MCF 10A (cell line): ENCODE measurements at regions of chr22 and their contacts with region 1.

Region 1: DNA sequence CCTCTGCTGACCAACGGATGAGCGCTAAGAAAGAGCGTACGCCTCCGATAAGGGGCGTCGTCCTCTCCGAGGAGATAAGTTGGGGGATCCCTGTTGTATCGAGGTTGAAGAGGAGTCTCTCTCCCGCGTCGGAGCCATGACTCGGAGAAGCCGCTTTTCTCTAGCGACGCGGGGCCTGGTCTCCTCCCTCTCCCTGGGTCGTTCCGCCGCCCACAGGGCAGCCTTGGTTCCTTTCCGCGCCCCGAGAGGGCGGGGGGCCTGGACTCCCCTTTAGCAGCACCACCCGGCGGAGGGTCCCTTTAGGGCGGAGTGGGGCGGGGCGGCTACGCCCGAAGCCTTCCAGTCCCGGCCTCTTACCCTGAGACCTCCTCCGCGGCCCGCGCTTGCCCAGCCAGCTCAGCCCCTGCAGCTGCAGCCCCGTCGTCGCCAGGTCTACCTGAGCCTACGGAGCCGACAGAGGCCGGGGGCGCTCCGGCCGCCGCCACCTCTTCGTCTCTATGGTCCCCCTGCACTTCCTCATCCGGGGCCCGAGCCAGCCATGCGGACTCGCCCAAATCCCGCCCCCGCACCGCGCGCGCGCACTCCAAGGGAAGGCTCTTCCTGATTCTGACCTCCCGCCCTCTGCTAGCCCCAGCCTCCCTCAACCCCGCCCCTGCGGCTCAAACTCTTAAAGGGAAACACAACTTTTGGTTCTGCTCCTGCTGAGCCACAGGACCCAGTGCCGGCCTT is at the start of gene PRR14L:
- DNase-seq: peak; percentile 97
- H3K4me3 Mint-ChIP-seq: peak within 1 kb of the TSS; percentile 80
- H3K27ac Mint-ChIP-seq: peak within 1 kb of the TSS; percentile 90
- H3K4me1 Mint-ChIP-seq: peaks cover 32% of the 10 kb centered on the region
- H3K27me3 Mint-ChIP-seq: no peaks in the 10 kb centered on the region
- CTCF ChIP-seq: no peak
- total RNA-seq, gene PRR14L: 37.4 and 55.0 TPM in 2 replicates

Region 2: DNA sequence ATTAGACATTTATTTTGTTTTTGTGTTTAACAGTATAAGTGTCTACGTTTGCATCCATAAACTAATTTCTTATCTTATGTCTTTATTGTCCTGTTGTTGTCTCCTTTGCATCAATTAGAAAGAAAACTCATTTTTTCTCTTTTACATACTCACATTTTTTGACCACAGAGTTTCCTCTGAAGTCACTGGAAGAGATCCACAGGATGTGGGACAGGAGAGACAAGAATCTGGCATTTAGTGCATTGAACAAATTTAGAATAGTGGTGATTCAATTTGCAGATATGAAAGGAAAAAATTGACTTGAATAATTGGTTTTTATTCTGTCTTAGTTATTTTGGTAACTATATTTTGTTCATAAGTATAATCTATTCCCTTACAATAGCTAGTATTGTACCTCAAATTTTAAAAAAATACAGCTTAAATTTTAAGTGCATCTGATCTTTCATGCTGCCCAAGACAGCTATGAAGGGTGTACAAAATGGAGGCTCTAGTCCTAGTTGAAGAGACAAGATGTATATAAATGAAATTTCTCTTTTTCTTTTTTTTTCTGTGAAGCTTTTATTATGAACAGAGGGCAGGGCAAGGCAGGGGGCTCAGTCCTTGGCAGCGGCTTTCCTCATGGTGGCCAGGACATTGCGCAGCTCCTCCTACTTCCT is 1645.2 kb before region 1 on chr22:
- CTCF ChIA-PET with region 1: no interaction called
- POLR2A ChIA-PET with region 1: no interaction called
- intact Hi-C with region 1: no loop called
- DNase-seq: no peak
- H3K4me3 Mint-ChIP-seq: no peak overlapping the region
- H3K27ac Mint-ChIP-seq: no peak overlapping the region
- H3K4me1 Mint-ChIP-seq: peaks cover 6% of the 10 kb centered on the region
- H3K27me3 Mint-ChIP-seq: no peaks in the 10 kb centered on the region
- CTCF ChIP-seq: no peak

Region 3: GRCh38 chr22:31676700-31677099 is 73.1 kb before region 1 on chr22:
- CTCF ChIA-PET with region 1: interaction called, 6 read pairs
- POLR2A ChIA-PET with region 1: interaction called, 7 read pairs
- intact Hi-C with region 1: loop called (anchors 5 kb)
- DNase-seq: peak; percentile 96
- H3K4me3 Mint-ChIP-seq: peak overlapping the region; percentile 86
- H3K27ac Mint-ChIP-seq: peak overlapping the region; percentile 97
- H3K4me1 Mint-ChIP-seq: peaks cover 18% of the 10 kb centered on the region
- H3K27me3 Mint-ChIP-seq: no peaks in the 10 kb centered on the region
- CTCF ChIP-seq: no peak

Region 4: DNA sequence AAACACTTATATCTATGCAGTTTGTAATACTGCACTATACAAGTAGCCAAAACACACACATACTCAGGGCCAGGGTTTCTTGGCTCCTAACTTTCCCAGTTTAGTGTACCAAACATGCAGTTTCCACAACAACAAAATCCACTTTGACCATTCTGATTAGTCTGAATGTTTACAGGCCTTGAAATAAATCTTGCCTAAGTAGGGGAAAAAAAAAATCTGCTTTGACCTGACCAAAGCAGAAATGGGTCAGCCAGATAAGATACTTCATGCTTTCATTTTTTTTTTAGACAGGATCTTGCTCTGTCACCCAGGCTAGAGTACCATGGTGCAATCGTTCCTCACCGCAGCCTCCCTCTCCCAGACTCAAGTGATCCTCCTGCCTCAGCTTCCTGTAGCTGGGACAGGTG is 10.0 kb before region 1 on chr22:
- CTCF ChIA-PET with region 1: no interaction called
- POLR2A ChIA-PET with region 1: interaction called, 11 read pairs
- intact Hi-C with region 1: no loop called
- DNase-seq: no peak
- H3K4me3 Mint-ChIP-seq: no peak overlapping the region
- H3K27ac Mint-ChIP-seq: peak overlapping the region; percentile 19
- H3K4me1 Mint-ChIP-seq: peaks cover 8% of the 10 kb centered on the region
- H3K27me3 Mint-ChIP-seq: no peaks in the 10 kb centered on the region
- CTCF ChIP-seq: no peak

Region 5: DNA sequence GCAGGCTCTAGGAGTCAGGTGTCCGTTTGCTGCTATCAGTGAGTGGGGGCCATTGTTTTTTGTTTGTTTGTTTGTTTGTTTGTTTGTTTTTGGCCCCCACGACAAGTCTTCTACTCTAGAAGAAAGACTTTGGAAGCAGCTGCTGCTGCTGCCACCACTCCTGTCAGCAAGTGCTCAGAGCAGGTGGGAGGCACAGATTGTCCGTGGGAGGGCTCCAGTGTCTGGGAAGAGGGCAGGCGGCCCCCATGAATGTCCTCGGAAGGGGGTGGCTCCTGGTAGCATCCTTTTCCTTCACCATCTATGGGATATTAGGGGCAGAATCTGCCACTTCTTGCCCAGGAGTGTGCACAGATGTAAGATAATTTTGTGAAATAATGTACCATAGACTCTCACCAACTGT is 156.8 kb after region 1 on chr22:
- CTCF ChIA-PET with region 1: no interaction called
- POLR2A ChIA-PET with region 1: no interaction called
- intact Hi-C with region 1: no loop called
- DNase-seq: no peak
- H3K4me3 Mint-ChIP-seq: no peak overlapping the region
- H3K27ac Mint-ChIP-seq: no peak overlapping the region
- H3K4me1 Mint-ChIP-seq: no peaks in the 10 kb centered on the region
- H3K27me3 Mint-ChIP-seq: no peaks in the 10 kb centered on the region
- CTCF ChIP-seq: no peak

Region 6: DNA sequence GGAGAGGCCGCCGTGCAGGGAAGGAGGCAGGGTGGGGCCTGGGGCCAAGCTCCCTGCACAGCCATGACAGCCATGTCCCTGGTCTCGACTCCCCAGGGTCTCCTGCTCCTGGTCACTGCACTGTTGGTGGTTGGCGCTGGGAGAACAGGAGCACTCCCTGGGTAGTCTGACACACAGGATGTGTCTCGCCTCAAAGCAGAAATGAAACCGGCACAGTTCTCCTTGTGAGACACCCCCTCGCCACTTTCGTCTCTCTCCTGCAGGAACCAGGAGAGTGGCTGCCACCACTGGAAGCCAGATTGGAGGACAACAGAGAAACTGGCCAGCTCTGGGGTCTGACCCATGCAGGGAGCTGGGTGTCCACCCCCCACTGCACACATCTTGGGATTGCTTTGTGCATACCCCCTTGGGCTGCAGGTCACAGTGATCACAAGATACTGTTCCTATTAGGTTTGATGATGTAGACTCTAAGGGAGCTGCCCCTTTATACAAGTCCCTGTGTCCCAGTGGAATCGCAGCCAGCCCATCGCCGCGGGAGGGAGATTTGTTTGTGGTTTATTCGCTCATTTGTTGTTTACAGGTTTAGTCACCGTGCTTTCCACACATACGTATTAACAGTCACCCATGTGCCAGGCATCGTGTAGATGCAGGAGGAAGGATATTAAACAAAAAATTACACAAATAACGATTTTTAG is 167.6 kb after region 1 on chr22:
- CTCF ChIA-PET with region 1: no interaction called
- POLR2A ChIA-PET with region 1: no interaction called
- intact Hi-C with region 1: no loop called
- DNase-seq: no peak
- H3K4me3 Mint-ChIP-seq: no peak overlapping the region
- H3K27ac Mint-ChIP-seq: no peak overlapping the region
- H3K4me1 Mint-ChIP-seq: no peaks in the 10 kb centered on the region
- H3K27me3 Mint-ChIP-seq: no peaks in the 10 kb centered on the region
- CTCF ChIP-seq: no peak